Thyroid gland (tissue), 4 donors: ENCODE measurements at regions of chr2 and their contacts with region 1.

Region 1: DNA sequence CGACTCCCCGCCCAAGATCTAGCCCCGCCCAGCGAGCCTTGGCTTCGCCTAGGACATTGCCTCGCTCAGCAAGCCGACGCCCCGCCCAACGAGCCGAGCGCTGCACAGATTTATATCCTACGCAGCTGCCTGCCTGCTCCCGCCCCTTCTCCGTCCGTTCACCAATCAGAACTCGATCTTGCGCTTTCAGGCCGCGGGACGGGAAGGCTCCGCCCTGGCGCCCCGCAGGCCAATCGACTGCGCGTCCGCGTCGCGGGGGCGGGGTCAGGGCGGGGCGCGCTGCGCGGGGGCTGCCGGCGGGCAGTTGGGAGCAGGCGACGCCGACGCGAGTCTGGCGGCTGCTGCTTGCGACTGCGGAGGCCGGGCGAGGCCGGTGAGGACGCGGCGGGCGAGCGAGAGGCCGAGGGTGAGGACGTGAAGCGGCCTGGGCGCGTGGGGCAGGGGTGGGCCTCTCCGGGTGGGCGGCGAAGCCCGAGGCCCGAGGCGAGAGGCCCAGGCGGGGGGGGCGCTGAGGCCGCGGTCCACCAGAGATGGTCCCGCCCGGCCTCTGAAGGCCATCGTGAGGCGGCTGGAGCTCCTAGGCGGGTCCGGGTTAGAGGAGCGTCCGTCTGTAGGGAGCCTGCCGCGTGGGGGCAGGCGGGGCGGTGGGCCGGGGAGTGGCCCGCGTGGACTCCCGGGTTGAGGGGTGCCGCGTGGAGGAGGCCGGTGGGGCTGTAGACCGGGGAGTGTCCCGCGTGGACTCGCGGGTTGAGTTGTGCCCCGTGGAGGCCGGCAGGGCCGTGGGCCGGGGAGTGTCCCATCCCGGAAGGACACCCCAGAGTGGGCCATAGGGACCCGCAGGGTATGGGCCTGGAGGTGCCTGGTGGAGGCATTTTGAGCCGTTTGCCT is at the start of gene FARP2:
- DNase-seq: peak; percentile 100
- H3K4me3 ChIP-seq: peak within 1 kb of the TSS; percentile 3 to 81 (median 51)
- H3K27ac ChIP-seq: peak within 1 kb of the TSS; percentile 35 to 76 (median 57)
- H3K4me1 ChIP-seq: peaks cover 11 to 21% of the 10 kb centered on the region in 2 donors
- H3K27me3 ChIP-seq: no peaks in the 10 kb centered on the region
- CTCF ChIP-seq: no peak
- POLR2A ChIP-seq: peak in 1 of 2 donors; percentile 85
- total RNA-seq, gene FARP2: 16.9 to 24.1 (median 20.3) TPM

Region 2: DNA sequence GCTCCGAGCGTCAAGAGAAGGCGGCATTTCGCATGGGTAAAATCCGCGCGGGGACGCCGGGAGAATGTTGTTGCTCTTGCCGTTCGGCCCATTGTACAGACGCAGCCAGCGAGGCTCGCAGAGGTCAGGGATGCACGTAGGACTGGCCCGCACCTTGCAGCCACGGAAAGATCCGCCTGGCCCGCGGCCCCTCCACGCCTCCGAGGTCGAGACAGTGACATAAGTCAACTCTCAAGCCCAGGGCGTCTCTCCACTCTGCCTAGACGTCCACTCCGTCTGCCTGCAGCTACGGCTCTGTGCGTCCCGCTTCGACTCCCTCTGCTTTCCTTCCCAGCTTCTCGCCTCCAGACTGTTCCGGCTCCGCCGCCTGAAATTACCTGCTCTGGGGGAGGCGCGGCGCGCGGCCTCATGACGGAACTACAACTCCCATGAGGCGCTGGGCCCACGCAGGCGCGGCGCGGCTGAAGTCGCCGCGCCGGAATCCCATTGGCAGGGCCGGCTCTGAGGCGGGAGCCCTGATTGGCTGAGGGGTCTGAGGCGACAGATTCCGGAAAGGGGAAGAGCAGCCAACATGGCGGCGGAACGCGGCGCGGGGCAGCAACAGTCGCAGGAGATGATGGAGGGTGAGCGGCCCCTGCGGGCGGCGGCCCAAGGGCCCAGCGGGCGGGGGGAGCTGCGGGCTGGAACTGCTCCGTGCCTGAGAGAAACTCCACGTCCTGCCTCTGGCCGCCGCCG is 206.1 kb before region 1 on chr2 and contains the start of gene PPP1R7:
- intact Hi-C with region 1: no loop called
- DNase-seq: peak; percentile 97
- H3K4me3 ChIP-seq: peak within 1 kb of the TSS; percentile 6 to 94 (median 83)
- H3K27ac ChIP-seq: peak within 1 kb of the TSS in 2 of 3 donors; percentile 26 to 60
- H3K4me1 ChIP-seq: peaks cover 8 to 13% of the 10 kb centered on the region in 2 donors
- H3K27me3 ChIP-seq: no peaks in the 10 kb centered on the region
- CTCF ChIP-seq: peak in 2 of 6 experiments; percentile 4 to 18
- POLR2A ChIP-seq: peak in 1 of 2 donors; percentile 74
- total RNA-seq, gene PPP1R7: 58.7 to 74.0 (median 68.8) TPM

Region 3: DNA sequence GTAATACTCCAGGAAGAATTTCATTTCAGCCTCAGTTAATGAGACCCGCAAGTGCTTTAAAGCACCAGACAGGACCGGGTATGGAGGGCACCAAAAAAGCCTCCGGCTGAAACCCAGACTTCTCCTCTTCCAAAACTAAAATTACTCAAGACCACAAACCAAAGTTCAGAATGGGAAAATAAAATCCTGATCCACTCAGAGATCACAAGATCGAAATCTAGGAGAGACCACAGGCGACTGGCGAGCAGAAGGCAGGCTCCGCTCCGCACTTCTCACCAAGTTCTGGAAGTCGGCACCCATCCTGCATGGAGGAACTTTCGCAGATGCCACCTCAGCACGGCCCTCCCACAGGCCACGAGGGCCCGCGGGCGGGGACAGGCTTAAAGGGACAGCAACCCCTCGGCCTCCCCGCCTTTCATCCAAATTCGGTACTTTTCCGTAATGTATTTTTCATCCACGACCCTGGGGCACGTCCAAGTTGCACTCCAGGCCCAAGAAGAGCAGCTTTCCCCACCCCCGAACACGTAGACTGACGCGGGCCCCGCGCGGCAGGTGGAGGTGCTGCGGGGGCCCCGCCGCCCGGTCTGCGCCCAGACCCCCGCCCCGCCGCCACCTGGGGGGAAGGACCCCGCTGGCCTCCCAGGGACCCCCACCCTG is 84.5 kb before region 1 on chr2:
- intact Hi-C with region 1: loop called (anchors 10 kb)
- DNase-seq: peak; percentile 92 to 93
- H3K4me3 ChIP-seq: peak overlapping the region; percentile 41 to 98 (median 92)
- H3K27ac ChIP-seq: peak overlapping the region; percentile 87 to 98 (median 95)
- H3K4me1 ChIP-seq: peaks cover 18 to 23% of the 10 kb centered on the region in 2 donors
- H3K27me3 ChIP-seq: no peaks in the 10 kb centered on the region
- CTCF ChIP-seq: no peak
- POLR2A ChIP-seq: peak in 1 of 2 donors; percentile 72

Region 4: GRCh38 chr2:241315093-241315878 is 40.9 kb before region 1 on chr2 and contains the start of gene HDLBP:
- intact Hi-C with region 1: loop called (anchors 5 kb)
- DNase-seq: peak; percentile 99 to 100
- H3K4me3 ChIP-seq: peak within 1 kb of the TSS; percentile 66 to 98 (median 96)
- H3K27ac ChIP-seq: peak within 1 kb of the TSS; percentile 99 to 100 (median 99)
- H3K4me1 ChIP-seq: peaks cover 29 to 48% of the 10 kb centered on the region in 2 donors
- H3K27me3 ChIP-seq: no peaks in the 10 kb centered on the region
- CTCF ChIP-seq: peak in 1 of 6 experiments; percentile 6
- POLR2A ChIP-seq: peak; percentile 46 to 87
- total RNA-seq, gene HDLBP: 303 to 490 (median 435) TPM

Region 5: DNA sequence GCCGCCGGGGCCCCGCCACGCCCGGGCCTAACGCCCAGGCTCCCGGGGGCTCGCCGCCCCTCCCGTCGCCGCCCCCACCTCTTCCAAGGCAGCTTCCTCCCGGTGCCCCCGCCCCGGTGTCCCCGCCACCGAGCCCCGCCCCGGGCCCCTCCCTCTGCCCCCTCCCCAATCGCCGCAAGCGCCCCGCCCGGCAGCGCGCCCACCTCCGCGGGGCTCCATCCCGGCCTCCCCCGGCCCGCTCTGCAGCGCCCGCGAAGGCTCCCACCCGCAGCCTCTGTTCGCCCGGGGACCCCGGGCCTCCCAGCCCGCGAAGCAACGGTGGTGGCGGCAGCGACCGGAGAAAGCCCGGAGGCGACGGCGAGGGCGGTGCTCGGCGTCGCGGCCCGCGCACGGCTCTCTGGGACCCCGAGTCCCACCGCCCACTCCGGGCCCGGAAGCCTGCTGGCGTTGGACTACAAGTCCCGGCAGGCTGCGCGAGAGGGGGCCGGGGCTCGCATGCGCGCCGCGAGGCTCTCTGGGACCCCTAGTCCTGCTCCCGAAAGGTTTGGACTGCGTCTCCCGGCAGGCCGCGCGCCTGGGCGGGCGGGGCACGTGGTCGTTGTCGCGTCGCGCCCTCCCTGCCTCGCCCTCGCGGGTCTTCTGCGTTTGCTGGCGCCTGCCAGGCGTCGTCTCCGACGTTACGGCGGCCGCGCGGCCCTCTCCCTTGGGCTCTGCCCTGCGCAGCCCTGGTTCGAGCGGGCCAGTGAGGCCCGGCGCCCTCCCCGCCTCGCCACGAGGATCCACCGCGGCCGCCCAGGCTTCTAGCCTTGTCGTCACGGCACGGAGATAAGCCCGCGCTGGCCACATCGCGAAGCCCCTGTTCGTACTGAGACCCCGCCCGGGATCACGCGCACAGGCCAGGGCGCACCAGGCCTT is 152.3 kb after region 1 on chr2 and contains the start of gene STK25:
- intact Hi-C with region 1: loop called (anchors 5 kb)
- DNase-seq: peak; percentile 99
- H3K4me3 ChIP-seq: peak within 1 kb of the TSS; percentile 60 to 87 (median 87)
- H3K27ac ChIP-seq: peak within 1 kb of the TSS; percentile 69 to 95 (median 79)
- H3K4me1 ChIP-seq: peaks cover 23 to 35% of the 10 kb centered on the region in 2 donors
- H3K27me3 ChIP-seq: no peaks in the 10 kb centered on the region
- CTCF ChIP-seq: peak in 1 of 6 experiments; percentile 21
- POLR2A ChIP-seq: peak in 1 of 2 donors; percentile 80
- total RNA-seq, gene STK25: 236 to 364 (median 266) TPM

Region 6: GRCh38 chr2:241702132-241703031 is 346.2 kb after region 1 on chr2:
- intact Hi-C with region 1: loop called (anchors 10 kb)
- DNase-seq: peak; percentile 89 to 95
- H3K4me3 ChIP-seq: peak overlapping the region; percentile 43 to 93 (median 90)
- H3K27ac ChIP-seq: peak overlapping the region in 1 of 3 donors; percentile 69
- H3K4me1 ChIP-seq: peaks cover 16 to 17% of the 10 kb centered on the region in 2 donors
- H3K27me3 ChIP-seq: no peaks in the 10 kb centered on the region
- CTCF ChIP-seq: peak in 5 of 6 experiments; percentile 45 to 58 (median 51)
- POLR2A ChIP-seq: peak in 1 of 2 donors; percentile 32